ENCODE measurements at regions of chr12 and their contacts with region 1.

Region 1: DNA sequence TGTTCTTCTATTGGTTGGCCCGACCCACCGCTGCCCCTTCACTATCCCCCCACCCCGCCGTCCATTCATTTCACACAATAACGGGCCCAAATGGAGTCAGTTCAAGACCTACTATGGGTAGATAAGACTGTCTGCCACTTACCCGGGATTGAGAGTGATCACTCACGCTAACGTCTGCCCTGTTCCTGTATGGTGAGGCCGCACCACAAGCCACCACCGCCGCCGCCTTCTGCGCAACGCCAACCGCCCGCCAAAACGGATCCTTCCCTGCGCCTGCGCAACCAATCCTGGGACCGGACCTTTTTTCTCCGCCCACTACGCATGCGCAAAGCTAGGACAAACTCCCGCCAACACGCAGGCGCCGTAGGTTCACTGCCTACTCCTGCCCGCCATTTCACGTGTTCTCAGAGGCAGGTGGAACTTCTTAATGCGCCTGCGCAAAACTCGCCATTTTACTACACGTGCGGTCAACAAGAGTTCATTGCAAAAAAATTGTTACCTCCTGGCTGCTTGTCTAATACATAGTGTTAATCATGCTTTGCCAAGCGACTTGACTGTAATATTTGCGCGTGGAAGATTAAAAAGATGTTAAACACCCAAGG is at the start of gene CBX5:
- DNase-seq: peak; percentile 99
- H3K4me3 ChIP-seq: peak within 1 kb of the TSS; percentile 73
- H3K27ac ChIP-seq: peak within 1 kb of the TSS; percentile 98
- H3K4me1 ChIP-seq: peaks cover 27% of the 10 kb centered on the region
- H3K27me3 ChIP-seq: no peaks in the 10 kb centered on the region
- CTCF ChIP-seq: no peak
- total RNA-seq, gene CBX5: 235 and 254 TPM in 2 replicates

Region 2: DNA sequence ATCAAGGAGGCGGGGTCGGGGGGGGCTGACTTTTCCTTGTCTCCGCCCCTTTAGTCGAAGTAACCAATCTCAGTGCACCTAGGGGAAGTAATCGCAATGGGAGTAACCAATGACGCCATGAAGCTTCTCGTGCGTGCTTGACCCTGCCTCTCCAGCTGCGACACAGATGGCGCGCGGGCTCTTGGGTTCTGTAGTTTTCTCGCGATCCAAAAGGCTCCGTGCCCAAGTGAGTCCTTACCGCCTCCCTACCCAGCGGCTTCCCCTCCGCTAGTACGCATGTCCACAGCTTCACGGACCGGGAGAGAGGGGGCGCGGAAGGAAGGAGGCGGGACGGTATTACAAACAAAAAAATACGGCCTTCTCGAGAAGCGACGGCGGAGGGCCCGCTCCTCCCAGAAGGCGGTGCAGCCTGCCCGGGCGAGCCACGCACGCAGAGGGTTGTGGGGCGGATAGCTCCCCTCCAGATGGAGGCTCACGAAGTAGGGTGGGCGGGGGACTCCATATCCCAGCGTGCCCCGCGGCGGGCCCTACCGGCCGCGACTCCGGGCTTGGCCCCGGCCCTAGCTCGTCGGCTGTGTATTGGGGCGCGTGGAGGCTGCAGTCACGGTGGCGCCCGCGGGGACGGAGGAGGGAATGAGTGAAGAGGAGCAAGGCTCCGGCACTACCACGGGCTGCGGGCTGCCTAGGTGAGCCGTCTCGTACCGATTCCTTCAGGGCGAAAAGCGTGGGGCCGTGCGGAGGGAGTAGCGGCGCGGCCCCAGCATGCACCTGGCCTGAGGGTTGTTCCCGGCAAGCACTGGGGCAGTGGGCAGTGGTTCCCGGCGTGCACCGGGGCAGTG is 779.0 kb before region 1 on chr12 and contains the start of gene TARBP2:
- CTCF ChIA-PET with region 1: no interaction called
- POLR2A ChIA-PET with region 1: no interaction called
- intact Hi-C with region 1: loop called (anchors 10 kb)
- DNase-seq: peak; percentile 100
- H3K4me3 ChIP-seq: peak within 1 kb of the TSS; percentile 54
- H3K27ac ChIP-seq: peak within 1 kb of the TSS; percentile 98
- H3K4me1 ChIP-seq: peaks cover 37% of the 10 kb centered on the region
- H3K27me3 ChIP-seq: no peaks in the 10 kb centered on the region
- CTCF ChIP-seq: no peak
- total RNA-seq, gene TARBP2: 62.4 and 70.9 TPM in 2 replicates

Region 3: GRCh38 chr12:54142114-54142475 is 137.9 kb before region 1 on chr12:
- CTCF ChIA-PET with region 1: no interaction called
- POLR2A ChIA-PET with region 1: no interaction called
- intact Hi-C with region 1: no loop called
- DNase-seq: peak; percentile 33
- H3K4me3 ChIP-seq: no peak overlapping the region
- H3K27ac ChIP-seq: no peak overlapping the region
- H3K4me1 ChIP-seq: no peaks in the 10 kb centered on the region
- H3K27me3 ChIP-seq: no peaks in the 10 kb centered on the region
- CTCF ChIP-seq: no peak

Region 4: GRCh38 chr12:54220092-54220557 is 59.8 kb before region 1 on chr12:
- CTCF ChIA-PET with region 1: interaction called, 8 read pairs
- POLR2A ChIA-PET with region 1: no interaction called
- intact Hi-C with region 1: loop called (anchors 5 kb)
- DNase-seq: peak; percentile 88
- H3K4me3 ChIP-seq: no peak overlapping the region
- H3K27ac ChIP-seq: no peak overlapping the region
- H3K4me1 ChIP-seq: peaks cover 19% of the 10 kb centered on the region
- H3K27me3 ChIP-seq: no peaks in the 10 kb centered on the region
- CTCF ChIP-seq: peak; percentile 80

Region 5: DNA sequence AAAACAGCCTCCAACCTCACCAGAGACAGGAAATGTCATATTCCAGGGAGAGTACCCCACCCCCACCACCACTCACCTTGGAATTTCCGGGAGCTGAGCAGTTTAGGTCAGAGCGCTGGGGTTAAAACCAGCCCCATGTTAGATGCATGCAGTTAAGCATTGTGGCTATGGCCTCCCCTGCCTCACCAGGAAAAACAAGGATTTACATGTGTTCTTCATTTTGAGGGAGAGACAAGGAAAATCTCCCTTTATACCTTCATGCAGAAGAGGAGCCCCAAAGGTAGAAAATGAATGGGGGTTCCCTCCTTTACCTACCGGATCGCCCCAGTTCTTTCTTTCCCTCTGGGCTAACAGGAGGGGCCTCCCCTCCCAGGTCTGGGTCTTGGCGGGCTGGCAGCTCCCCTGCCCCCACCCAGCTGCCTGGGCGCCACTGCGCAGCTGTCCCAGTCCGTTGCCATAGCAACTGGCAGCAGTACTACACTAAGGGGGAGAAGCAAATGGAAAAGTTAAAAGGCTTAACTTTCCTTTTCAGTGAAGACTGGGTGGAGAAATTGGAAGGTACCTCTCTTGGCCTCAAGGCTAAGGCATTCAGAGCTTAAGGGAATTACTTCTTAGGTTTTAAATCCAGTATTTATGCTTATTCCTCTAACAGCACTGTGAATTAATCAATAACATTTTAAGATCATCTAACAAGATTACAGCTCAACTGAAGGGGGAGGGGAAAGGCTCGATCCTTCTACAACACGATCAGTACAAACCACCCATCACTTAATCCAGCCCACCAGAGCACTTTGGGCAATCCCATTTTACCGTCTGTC is 20.6 kb before region 1 on chr12:
- CTCF ChIA-PET with region 1: no interaction called
- POLR2A ChIA-PET with region 1: interaction called, 16 read pairs
- intact Hi-C with region 1: loop called (anchors 1 kb)
- DNase-seq: peak; percentile 97
- H3K4me3 ChIP-seq: peak overlapping the region; percentile 50
- H3K27ac ChIP-seq: peak overlapping the region; percentile 87
- H3K4me1 ChIP-seq: peaks cover 59% of the 10 kb centered on the region
- H3K27me3 ChIP-seq: no peaks in the 10 kb centered on the region
- CTCF ChIP-seq: no peak

Region 6: DNA sequence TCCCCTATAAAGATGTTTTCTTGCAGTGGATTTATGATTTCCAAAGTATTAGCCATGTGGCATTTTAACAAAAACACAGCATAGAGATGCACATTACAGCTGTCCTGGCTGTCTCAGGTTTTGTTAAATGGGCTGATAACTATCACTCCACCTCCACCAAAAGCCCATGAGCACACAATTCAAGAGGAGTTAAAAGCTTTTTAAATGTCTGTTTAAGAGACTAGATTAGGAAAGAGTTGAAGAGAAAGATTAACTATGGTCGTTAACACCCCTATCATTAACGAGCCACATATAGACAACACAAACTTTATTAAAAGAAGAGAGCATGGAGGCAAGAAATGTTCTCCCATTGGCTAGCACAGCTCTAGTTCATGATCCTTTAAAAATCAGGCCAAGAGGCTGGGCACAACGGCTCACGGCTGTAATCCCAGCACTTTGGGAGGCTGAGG is 14.6 kb before region 1 on chr12:
- CTCF ChIA-PET with region 1: no interaction called
- POLR2A ChIA-PET with region 1: interaction called, 13 read pairs
- intact Hi-C with region 1: no loop called
- DNase-seq: no peak
- H3K4me3 ChIP-seq: no peak overlapping the region
- H3K27ac ChIP-seq: peak overlapping the region; percentile 45
- H3K4me1 ChIP-seq: peaks cover 27% of the 10 kb centered on the region
- H3K27me3 ChIP-seq: no peaks in the 10 kb centered on the region
- CTCF ChIP-seq: no peak

Region 7: DNA sequence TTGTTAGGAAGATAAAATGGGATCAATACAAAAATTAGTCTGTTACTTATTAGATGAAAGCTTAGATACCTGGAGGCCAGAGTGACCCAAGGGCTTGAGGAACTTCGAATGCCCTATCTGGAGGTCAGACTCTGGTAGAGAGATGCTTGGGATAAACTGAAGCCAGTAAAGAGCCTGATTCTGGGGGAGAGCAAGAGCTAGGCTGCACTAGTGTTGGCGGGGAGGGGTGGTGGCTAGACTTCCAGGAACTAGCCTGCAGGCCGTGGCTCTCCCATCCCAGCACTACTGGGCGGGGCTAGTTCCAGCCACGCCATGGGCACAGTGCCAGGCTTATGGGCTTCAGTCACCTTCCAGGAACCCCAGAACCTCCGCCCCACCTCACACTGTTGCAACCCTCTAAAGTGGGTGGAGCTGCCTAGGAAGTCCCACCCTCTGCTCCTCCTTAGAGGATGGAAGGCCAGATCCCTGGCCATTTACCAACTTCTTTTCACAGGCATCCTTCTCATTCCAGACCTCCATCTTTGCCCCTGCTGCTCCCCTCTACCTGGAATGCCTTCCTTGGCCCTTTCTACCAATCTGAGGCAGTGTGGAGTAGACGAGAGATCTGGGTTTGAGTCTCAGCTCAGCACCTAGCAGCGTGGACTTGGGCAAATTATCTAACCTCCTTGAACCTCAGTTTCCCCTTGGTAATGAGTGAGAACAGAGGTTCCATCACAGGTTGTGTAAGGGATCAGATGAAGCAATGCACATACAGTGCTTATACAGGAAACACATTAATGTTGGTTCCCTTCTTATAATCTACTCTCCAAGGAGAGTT is 27.2 kb after region 1 on chr12:
- CTCF ChIA-PET with region 1: no interaction called
- POLR2A ChIA-PET with region 1: interaction called, 19 read pairs
- intact Hi-C with region 1: no loop called
- DNase-seq: no peak
- H3K4me3 ChIP-seq: no peak overlapping the region
- H3K27ac ChIP-seq: no peak overlapping the region
- H3K4me1 ChIP-seq: no peaks in the 10 kb centered on the region
- H3K27me3 ChIP-seq: no peaks in the 10 kb centered on the region
- CTCF ChIP-seq: no peak

Region 8: GRCh38 chr12:54337280-54337842 is 57.4 kb after region 1 on chr12:
- CTCF ChIA-PET with region 1: no interaction called
- POLR2A ChIA-PET with region 1: no interaction called
- intact Hi-C with region 1: no loop called
- DNase-seq: no peak
- H3K4me3 ChIP-seq: no peak overlapping the region
- H3K27ac ChIP-seq: no peak overlapping the region
- H3K4me1 ChIP-seq: peaks cover 11% of the 10 kb centered on the region
- H3K27me3 ChIP-seq: no peaks in the 10 kb centered on the region
- CTCF ChIP-seq: no peak

Region 9: GRCh38 chr12:54701940-54702592 is 422.1 kb after region 1 on chr12:
- CTCF ChIA-PET with region 1: no interaction called
- POLR2A ChIA-PET with region 1: no interaction called
- intact Hi-C with region 1: no loop called
- DNase-seq: peak; percentile 70
- H3K4me3 ChIP-seq: no peak overlapping the region
- H3K27ac ChIP-seq: no peak overlapping the region
- H3K4me1 ChIP-seq: peaks cover 13% of the 10 kb centered on the region
- H3K27me3 ChIP-seq: no peaks in the 10 kb centered on the region
- CTCF ChIP-seq: peak; percentile 77

Region 10: DNA sequence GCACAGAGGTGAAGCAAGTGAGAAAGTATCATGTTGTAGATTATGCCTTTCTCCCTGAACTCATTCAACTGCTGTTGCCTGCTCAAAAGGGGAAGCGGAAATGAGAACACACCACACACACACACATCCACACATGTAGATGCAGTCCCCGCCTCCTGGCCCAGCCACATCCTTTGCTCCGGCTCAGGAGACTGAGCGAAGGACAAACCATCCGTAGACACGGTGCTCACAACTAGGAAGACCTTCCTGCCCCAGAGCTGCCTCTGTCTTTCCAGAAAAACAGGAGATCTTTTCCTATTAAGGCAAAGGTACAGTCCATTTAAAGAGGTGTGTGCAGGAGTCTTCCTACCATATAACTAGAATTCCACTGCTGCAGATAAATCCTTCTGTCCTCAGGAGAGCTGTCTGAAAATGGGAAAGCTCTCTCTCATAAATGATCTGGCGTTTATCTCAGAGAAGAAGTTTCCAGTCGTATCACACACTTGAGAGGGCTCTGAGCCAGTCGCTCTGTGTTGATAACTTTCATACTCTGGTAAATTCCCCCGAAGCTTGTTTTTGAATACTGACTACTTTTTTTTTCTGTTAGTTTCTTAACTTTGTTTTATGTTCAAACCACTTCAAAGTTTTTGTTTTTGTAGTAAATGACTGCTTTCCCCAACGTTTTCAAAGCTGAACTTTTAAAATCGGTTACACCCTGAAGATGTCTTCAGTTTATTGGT is 704.9 kb after region 1 on chr12 and contains the start of gene TESPA1:
- CTCF ChIA-PET with region 1: no interaction called
- POLR2A ChIA-PET with region 1: no interaction called
- intact Hi-C with region 1: no loop called
- DNase-seq: no peak
- H3K4me3 ChIP-seq: no peak within 1 kb of the TSS
- H3K27ac ChIP-seq: no peak within 1 kb of the TSS
- H3K4me1 ChIP-seq: no peaks in the 10 kb centered on the region
- H3K27me3 ChIP-seq: no peaks in the 10 kb centered on the region
- CTCF ChIP-seq: no peak
- total RNA-seq, gene TESPA1: not detected in 2 replicates

Measured in A673 (cell line).